IMR-90 (cell line): ENCODE measurements at regions of chr9 and their contacts with region 1.

Region 1: GRCh38 chr9:73683862-73684591 is 532.4 kb downstream of the ANXA1 start:
- DNase-seq: no peak
- ATAC-seq: no peak
- H3K4me3 ChIP-seq: no peak overlapping the region
- H3K27ac ChIP-seq: no peak overlapping the region
- H3K4me1 ChIP-seq: no peaks in the 10 kb centered on the region
- H3K27me3 ChIP-seq: no peaks in the 10 kb centered on the region
- CTCF ChIP-seq: peak; percentile 75
- POLR2A ChIP-seq: no peak
- RAD21 ChIP-seq: peak; percentile 79

Region 2: GRCh38 chr9:73916016-73916673 is 232.1 kb after region 1 on chr9:
- CTCF ChIA-PET with region 1: no interaction called
- POLR2A ChIA-PET with region 1: no interaction called
- dilution Hi-C with region 1: no loop called
- in situ Hi-C with region 1: no loop called
- intact Hi-C with region 1: loop called (anchors 10 kb)
- DNase-seq: no peak
- ATAC-seq: no peak
- H3K4me3 ChIP-seq: no peak overlapping the region
- H3K27ac ChIP-seq: no peak overlapping the region
- H3K4me1 ChIP-seq: no peaks in the 10 kb centered on the region
- H3K27me3 ChIP-seq: no peaks in the 10 kb centered on the region
- CTCF ChIP-seq: no peak
- POLR2A ChIP-seq: no peak
- RAD21 ChIP-seq: no peak

Region 3: DNA sequence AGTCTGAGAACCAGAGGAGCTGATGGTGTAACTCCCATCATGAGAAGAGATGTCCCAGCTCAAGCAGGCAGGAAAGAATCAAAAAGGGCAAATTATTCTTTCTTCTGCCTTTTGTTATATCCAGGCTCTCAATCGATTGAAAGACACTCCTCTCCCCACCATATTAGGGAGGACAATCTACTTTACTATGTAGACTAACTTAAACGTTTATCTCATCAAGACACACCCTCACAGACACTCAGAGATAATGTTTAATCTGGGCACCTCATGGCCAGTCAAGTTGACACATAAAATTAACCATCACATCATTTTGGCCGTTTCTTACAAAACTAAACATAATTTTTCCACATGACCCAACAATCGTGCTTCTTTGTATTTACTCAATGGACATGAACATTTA is 278.8 kb after region 1 on chr9:
- CTCF ChIA-PET with region 1: no interaction called
- POLR2A ChIA-PET with region 1: no interaction called
- dilution Hi-C with region 1: no loop called
- in situ Hi-C with region 1: no loop called
- intact Hi-C with region 1: no loop called
- DNase-seq: no peak
- ATAC-seq: no peak
- H3K4me3 ChIP-seq: no peak overlapping the region
- H3K27ac ChIP-seq: no peak overlapping the region
- H3K4me1 ChIP-seq: no peaks in the 10 kb centered on the region
- H3K27me3 ChIP-seq: no peaks in the 10 kb centered on the region
- CTCF ChIP-seq: no peak
- POLR2A ChIP-seq: no peak
- RAD21 ChIP-seq: no peak